ENCODE measurements at regions of chr5 and their contacts with region 1.

Region 1: DNA sequence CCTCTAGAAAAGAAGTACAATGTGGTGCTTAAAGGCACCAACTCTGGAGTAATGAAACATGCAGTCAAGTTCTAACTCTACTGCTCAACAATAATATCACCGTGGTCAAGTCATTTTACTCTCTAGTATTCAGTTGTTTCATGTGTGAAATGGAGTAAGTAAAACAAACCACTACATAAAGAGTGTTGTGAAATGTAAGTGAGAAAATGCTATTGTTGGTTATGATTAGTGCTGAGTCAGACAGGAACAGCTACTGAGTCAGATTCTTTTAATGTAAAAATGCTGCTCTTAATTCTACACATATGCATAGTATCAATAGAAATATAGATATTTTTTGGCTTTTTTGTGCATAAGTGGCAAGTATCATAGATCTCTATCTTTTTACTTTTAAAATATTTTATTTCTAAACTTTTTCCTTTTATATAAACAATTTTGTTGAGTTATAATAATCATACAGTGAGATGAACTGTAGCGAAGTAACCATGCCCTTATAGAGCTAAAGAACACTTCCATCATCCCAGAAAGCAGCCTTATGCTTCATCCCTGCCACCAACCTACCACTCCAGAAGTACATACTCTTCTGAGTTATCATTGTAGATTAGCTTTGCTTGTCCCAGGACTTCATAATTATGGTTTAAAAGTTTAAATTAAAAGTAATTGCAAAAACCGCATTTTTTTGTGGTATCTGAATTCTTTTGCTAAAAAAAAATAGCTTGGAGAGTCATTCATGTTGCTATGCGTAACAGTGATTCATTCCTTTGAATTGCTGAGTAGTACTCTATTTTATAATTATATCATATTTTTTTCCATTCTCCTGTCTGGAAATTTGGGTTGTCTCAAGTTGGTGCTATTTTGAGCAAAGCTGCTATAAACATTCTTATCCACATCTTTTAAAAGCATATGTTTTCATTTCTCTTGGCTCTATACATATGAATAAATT is 548.2 kb upstream of the CLINT1 start:
- DNase-seq: no peak
- ATAC-seq: peak; percentile 67
- H3K4me3 ChIP-seq: no peak overlapping the region
- H3K27ac ChIP-seq: no peak overlapping the region
- H3K4me1 ChIP-seq: peaks cover 0 to 3% of the 10 kb centered on the region in 2 donors
- H3K27me3 ChIP-seq: no peaks in the 10 kb centered on the region

Region 2: GRCh38 chr5:158456756-158457155 is 49.6 kb after region 1 on chr5:
- intact Hi-C with region 1: loop called in 1 of 2 experiments (anchors 10 kb)
- DNase-seq: peak; percentile 64 to 77
- ATAC-seq: no peak
- H3K4me3 ChIP-seq: no peak overlapping the region
- H3K27ac ChIP-seq: no peak overlapping the region
- H3K4me1 ChIP-seq: peaks cover 2 to 3% of the 10 kb centered on the region in 2 donors
- H3K27me3 ChIP-seq: no peaks in the 10 kb centered on the region

Measured in aorta (tissue), 5 donors.